ENCODE measurements at regions of chr1 and their contacts with region 1.

Region 1: GRCh38 chr1:78004719-78005447 is at the start of gene DNAJB4:
- DNase-seq: peak; percentile 47 to 95
- ATAC-seq: peak; percentile 98
- H3K4me3 ChIP-seq: peak within 1 kb of the TSS; percentile 58
- H3K27ac ChIP-seq: peak within 1 kb of the TSS; percentile 83 to 87
- H3K4me1 ChIP-seq: peaks cover 34% of the 10 kb centered on the region
- CTCF ChIP-seq: no peak
- EP300 ChIP-seq: no peak
- POLR2A ChIP-seq: peak; percentile 25; the same call in 1 of the 2 replicates
- RAD21 ChIP-seq: no peak
- polyA plus RNA-seq, gene DNAJB4: 18.5 and 30.0 TPM in 2 replicates

Region 2: GRCh38 chr1:77412796-77413530 is 591.9 kb before region 1 on chr1:
- CTCF ChIA-PET with region 1: no interaction called
- POLR2A ChIA-PET with region 1: no interaction called
- DNase-seq: no peak
- ATAC-seq: peak in 1 of 2 experiments; percentile 48; a peak in 2 of 6 replicates
- H3K4me3 ChIP-seq: no peak overlapping the region
- H3K27ac ChIP-seq: peak overlapping the region; percentile 63 to 82
- H3K4me1 ChIP-seq: peaks cover 22% of the 10 kb centered on the region
- CTCF ChIP-seq: no peak
- EP300 ChIP-seq: no peak
- POLR2A ChIP-seq: no peak
- RAD21 ChIP-seq: no peak

Region 3: DNA sequence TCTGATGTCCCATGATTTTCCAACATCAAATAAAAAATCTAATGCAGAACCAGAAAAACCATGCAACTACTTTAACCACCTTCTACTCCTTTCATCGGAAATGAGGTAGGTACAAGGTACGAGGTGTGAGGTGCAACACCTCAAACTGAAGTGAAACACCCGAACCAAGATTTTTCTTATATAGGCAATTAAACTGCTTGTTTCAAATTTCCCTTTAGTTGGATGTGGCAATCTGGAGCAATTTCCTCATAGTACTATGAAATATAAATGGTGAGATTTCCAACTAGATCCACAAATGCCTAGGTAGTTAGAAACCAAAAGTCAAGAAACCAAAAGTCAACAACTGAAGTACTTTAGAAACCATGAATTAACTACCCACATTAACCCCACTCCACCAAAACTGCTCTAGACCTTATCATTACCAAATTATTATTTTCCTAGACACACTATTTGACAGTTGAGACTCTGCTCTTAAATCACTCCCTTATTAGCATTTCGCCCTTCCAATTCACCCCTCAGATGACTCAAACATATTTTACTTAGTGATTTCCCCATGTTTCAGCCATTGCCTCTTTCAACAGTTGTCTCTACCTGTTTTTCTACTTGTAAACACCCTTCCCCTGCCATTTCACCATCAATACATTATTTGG is 63.8 kb before region 1 on chr1:
- CTCF ChIA-PET with region 1: no interaction called
- POLR2A ChIA-PET with region 1: no interaction called
- DNase-seq: no peak
- ATAC-seq: no peak
- H3K4me3 ChIP-seq: no peak overlapping the region
- H3K27ac ChIP-seq: no peak overlapping the region
- H3K4me1 ChIP-seq: no peaks in the 10 kb centered on the region
- CTCF ChIP-seq: no peak
- EP300 ChIP-seq: no peak
- POLR2A ChIP-seq: no peak
- RAD21 ChIP-seq: no peak

Region 4: DNA sequence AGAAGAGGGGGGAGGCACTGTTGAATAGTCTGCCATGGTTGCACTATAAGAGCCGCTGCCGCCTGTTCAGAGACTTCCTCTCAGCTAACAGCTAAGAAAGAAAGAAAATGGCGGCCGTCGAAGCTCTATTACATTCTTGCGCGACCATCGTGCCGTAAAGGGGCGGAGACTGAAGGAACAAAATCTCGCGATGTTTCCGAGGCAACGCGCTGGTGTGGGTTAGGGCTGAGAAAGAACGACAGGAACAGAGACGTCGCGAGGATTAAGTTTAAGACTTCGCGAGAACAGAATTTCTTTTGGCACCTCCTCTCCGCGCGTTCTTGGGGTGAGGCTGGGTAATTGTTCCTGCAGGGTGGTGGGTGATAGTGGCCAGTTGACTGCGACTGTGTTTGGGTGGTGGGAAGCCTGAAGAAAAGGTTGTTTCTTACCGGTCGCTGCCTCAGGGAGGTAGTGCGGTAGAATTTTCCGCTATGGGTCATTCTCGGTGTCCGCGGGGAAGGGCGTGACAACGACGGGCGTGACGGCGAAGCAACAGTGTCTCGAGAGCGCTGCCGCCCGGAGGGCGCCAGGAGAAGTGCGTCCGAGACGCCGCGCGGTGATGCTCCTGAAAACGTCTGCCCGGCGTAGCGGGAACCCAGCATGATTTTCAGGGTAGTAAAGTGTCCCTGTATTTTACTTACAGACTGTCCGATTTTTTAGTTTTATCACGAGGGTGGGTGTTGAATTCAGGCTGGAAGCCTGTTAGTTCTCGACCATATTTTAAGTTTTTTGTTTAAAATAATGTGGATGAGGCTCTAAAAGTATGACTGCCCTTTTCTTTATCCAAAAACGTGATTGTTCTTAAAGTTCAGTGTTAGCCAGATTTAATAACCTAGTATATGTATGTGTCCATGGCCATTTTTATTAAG is 25.7 kb before region 1 on chr1 and contains the start of gene FUBP1:
- CTCF ChIA-PET with region 1: interaction called, 6 read pairs
- POLR2A ChIA-PET with region 1: interaction called, 94 read pairs
- DNase-seq: peak; percentile 70 to 98
- ATAC-seq: peak; percentile 90 to 93
- H3K4me3 ChIP-seq: peak within 1 kb of the TSS; percentile 71
- H3K27ac ChIP-seq: peak within 1 kb of the TSS; percentile 88 to 92
- H3K4me1 ChIP-seq: peaks cover 48% of the 10 kb centered on the region
- CTCF ChIP-seq: peak; percentile 41
- EP300 ChIP-seq: no peak
- POLR2A ChIP-seq: peak; percentile 59
- RAD21 ChIP-seq: peak in 1 of 2 experiments; percentile 5; a peak in 1 of 5 replicates
- polyA plus RNA-seq, gene FUBP1: 126 and 183 TPM in 2 replicates

Region 5: DNA sequence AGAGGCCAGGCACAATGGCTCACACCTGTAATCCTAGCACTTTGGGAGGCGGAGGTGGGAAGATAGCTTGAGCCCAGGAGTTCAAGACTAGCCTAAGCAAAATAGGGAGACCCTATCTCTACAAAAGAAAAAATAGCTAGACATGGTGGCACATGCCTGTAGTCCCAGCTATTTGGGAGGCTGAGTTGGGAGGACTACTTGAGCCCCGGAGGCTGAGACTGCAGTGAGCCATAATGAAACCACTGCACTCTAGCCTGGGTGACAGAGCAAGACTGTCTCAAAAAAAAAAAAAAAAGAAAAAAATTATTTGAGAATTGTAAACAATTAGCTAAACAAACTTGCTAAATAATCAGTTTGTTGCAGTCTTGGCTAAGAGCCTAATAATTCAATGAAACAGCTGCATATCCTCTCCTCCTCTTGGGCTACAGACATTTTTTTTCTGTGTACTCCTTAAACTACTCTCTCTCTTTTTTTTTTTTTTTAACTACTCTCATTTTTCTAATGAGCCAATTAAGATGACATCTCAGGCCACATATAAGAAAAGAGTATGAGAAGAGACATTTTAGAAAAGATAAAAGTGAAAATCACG is 10.7 kb before region 1 on chr1:
- CTCF ChIA-PET with region 1: interaction called, 4 read pairs
- POLR2A ChIA-PET with region 1: interaction called, 13 read pairs
- DNase-seq: no peak
- ATAC-seq: no peak
- H3K4me3 ChIP-seq: no peak overlapping the region
- H3K27ac ChIP-seq: no peak overlapping the region
- H3K4me1 ChIP-seq: peaks cover 9% of the 10 kb centered on the region; the same call in 2 of the 3 replicates
- CTCF ChIP-seq: no peak
- EP300 ChIP-seq: no peak
- POLR2A ChIP-seq: no peak
- RAD21 ChIP-seq: no peak

Region 6: DNA sequence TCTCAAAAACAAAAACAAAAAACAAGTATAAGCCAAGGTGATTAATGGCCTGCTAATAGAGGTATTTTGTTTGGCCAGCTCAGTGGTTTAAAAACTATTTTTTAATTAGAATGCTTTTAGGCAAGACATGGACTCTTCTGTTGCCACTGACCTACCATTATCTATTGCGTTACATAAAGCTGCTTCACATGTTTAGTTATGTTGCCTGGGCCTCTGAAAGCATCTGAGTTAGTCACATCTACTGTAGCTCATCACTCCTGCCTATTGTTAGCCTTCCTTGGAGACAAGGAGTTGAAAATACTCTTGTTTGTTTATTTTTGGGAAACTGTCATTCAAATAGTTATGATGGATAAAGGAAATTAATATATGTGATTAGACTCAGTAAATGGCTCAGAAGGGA is 14.1 kb after region 1 on chr1:
- CTCF ChIA-PET with region 1: no interaction called
- POLR2A ChIA-PET with region 1: interaction called, 15 read pairs
- DNase-seq: no peak
- ATAC-seq: no peak; a peak in 1 of 6 replicates
- H3K4me3 ChIP-seq: no peak overlapping the region
- H3K27ac ChIP-seq: no peak overlapping the region
- H3K4me1 ChIP-seq: no peaks in the 10 kb centered on the region
- CTCF ChIP-seq: no peak
- EP300 ChIP-seq: no peak
- POLR2A ChIP-seq: no peak
- RAD21 ChIP-seq: no peak

Region 7: GRCh38 chr1:78101514-78101913 is 96.6 kb after region 1 on chr1:
- CTCF ChIA-PET with region 1: interaction called, 4 read pairs
- POLR2A ChIA-PET with region 1: interaction called, 48 read pairs
- DNase-seq: peak; percentile 24 to 63
- ATAC-seq: peak; percentile 82 to 88
- H3K4me3 ChIP-seq: no peak overlapping the region
- H3K27ac ChIP-seq: peak overlapping the region; percentile 67 to 84
- H3K4me1 ChIP-seq: peaks cover 21% of the 10 kb centered on the region
- CTCF ChIP-seq: no peak
- EP300 ChIP-seq: no peak; a peak in 1 of 5 replicates
- POLR2A ChIP-seq: no peak
- RAD21 ChIP-seq: no peak

Region 8: DNA sequence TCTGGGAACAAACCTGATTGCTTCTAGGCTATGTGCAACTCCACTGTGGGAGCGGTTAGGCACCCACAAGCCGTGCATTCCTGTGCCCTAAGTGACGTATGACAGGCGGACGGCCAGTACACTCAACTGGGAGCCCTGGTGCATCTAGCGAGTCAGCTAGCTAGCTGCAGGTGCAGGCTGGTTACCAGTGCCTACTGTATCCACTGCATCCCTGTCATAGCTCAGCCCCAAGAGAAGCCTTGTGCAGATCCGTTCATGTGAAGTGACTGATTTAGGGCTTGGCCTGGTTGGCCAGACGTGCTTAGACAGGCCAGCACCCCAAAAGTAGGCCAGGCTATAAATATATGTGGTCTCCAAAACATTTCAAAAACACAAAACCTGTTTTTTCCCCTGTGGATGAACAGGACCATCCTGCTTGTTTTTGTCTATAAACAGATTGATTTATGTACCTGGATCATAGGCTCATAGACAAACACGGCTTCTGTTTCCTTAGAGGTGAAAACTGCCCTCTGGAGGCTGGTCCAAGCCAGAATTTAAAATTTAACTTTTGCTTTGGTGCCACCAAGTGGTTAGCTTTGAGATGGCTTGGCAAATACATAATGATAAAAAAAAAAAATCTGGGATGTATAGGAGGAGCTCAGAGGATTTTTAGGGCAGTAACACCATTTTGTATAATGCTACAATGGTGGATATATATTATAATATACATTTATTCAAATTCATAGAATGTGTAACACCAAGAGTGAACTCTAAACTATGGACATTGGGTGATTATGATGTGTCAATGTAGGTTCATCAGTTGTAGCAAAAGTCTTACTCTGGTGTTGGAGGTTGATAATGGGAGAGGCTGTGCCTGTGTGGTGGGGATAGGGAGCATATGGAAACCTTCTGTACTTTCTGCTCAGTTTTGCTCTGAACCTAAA is 109.4 kb after region 1 on chr1:
- CTCF ChIA-PET with region 1: interaction called, 32 read pairs
- POLR2A ChIA-PET with region 1: interaction called, 27 read pairs
- DNase-seq: peak; percentile 48 to 70
- ATAC-seq: peak; percentile 86 to 88
- H3K4me3 ChIP-seq: no peak overlapping the region
- H3K27ac ChIP-seq: peak overlapping the region; percentile 3 to 40; a peak in 3 of 6 replicates
- H3K4me1 ChIP-seq: no peaks in the 10 kb centered on the region
- CTCF ChIP-seq: peak; percentile 97
- EP300 ChIP-seq: no peak
- POLR2A ChIP-seq: no peak
- RAD21 ChIP-seq: peak; percentile 94 to 96